AG04449 (cell line): ENCODE measurements at regions of chr10 and their contacts with region 1.

Region 1: GRCh38 chr10:33155720-33156638 is 178.5 kb downstream of the NRP1 start:
- DNase-seq: no peak
- H3K4me3 ChIP-seq: no peak overlapping the region
- CTCF ChIP-seq: peak; percentile 51

Region 2: DNA sequence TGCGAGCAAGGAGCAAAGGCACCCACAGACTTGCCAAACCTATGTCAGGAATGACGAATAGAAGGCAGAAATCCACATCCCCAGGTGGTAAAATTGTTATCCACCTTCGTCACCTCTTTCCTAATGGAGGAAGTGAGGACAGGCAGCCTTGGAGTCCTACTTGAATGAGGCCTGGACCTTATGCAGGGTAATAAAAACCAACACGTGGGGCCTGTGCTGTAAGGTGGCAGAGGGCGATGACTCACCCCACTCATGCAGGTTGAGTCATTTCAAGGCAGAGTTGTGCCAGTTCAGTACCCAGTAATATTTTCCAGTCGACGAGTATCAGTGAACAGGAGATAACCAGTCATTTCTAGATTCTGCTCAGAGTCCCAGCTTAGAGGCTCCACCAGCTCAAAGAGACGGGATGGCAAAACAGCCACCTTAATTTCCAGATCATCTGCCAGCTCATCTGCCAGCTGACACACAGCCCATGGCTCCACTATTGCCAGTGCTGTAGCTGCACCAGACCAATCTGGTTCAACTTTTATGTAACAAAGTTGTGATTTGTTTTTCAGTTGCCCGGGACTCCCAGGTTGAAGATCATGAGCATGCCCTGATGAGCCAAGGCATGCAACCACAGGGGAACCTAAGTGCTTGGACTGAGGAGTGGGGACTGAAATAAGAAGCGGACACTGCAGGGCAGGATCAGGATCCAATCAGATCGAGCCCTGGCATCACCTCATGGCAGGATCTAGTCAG is 21.8 kb before region 1 on chr10:
- CTCF ChIA-PET with region 1: interaction called, 11 read pairs
- POLR2A ChIA-PET with region 1: no interaction called
- DNase-seq: peak; percentile 82
- H3K4me3 ChIP-seq: no peak overlapping the region
- CTCF ChIP-seq: no peak

Region 3: DNA sequence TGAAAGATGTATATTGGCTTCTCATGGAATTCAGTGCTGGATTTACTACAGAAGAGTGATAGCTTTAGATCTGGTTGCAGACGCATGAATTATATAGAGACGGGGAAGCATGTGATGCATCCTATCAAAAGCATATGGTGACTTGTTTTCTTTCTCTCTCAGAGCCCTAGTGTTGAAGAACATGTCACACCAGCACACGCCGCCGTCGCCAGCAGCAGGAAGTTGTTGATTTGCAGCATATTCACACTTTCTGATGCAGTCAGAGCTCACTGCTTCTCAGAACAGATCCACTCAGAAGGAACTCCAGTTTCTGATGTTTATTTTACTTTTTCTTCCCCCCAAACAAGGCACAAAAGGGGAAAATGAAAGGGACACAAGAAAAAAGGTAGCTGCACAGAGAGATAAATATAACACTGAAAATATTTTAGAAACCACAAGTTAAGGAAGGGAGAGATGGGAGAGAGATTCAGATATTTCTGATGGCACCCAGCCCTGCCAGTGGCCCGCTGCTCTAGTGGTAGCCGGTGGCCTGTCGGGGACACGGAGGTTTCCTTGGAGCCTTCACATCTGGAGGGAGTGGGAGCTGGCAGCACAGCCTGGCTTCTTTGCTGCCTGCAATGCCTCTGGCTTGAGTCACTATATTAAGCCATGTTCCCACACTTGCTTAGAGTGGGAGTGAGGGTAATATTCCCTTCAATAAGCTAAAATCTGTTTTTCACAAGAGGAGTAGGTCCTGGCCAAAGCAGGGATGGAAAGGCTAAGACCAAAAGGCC is 55.3 kb after region 1 on chr10:
- CTCF ChIA-PET with region 1: no interaction called
- POLR2A ChIA-PET with region 1: no interaction called
- DNase-seq: no peak
- H3K4me3 ChIP-seq: no peak overlapping the region
- CTCF ChIP-seq: no peak